Dorsolateral prefrontal cortex (tissue), 120 donors: ENCODE measurements at regions of chrX and their contacts with region 1.

Region 1: DNA sequence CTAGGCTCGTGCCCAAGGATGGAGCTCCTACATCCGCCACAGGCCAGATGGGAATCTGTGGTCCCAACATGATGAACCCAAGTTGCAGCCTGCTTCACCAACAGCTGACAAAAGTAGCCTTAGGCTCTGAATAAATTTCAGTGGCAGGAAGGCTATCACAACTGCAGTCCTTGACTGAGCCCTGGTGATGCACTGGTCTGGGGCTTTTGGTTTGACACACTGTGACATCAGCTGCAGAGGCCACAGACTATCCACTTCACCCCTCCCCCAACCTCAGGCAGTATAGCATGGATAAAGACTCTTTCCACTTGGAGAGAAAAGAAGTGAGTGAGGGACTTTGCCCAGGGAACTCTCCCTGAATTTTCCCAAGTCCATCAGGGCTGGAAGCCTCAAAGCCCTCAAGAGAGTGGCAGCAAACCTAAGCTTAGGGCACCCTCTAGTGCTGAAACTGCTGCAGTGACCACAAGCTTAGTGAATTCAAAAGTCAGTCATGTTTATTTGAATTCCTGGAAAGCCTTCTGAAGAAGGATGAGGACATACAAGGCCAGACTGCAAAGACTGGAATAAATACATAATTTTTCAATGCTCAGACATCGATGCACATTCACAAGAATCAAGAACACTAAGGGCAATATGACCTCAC is 135.0 kb upstream of the TENT5D start:
- DNase-seq: no peak
- H3K4me3 ChIP-seq: no peak overlapping the region
- H3K27ac ChIP-seq: no peak overlapping the region
- H3K27me3 ChIP-seq: peaks cover 0 to 34% (median 0%) of the 10 kb centered on the region in 45 donors
- CTCF ChIP-seq: peak in 11 of 56 donors; percentile 10 to 41 (median 15)

Region 2: GRCh38 chrX:79195027-79195426 is 1090.2 kb before region 1 on chrX:
- intact Hi-C with region 1: no loop called
- DNase-seq: no peak
- H3K4me3 ChIP-seq: no peak overlapping the region
- H3K27ac ChIP-seq: no peak overlapping the region
- H3K27me3 ChIP-seq: peaks cover 0 to 45% (median 8%) of the 10 kb centered on the region in 45 donors
- CTCF ChIP-seq: no peak

Region 3: GRCh38 chrX:80354966-80355465 is 69.8 kb after region 1 on chrX:
- intact Hi-C with region 1: no loop called
- DNase-seq: no peak
- H3K4me3 ChIP-seq: no peak overlapping the region
- H3K27ac ChIP-seq: no peak overlapping the region
- H3K27me3 ChIP-seq: peaks cover 0 to 57% (median 19%) of the 10 kb centered on the region in 45 donors
- CTCF ChIP-seq: no peak

Region 4: GRCh38 chrX:80403499-80403898 is 118.2 kb after region 1 on chrX:
- intact Hi-C with region 1: no loop called
- DNase-seq: no peak
- H3K4me3 ChIP-seq: no peak overlapping the region
- H3K27ac ChIP-seq: no peak overlapping the region
- H3K27me3 ChIP-seq: peaks cover 0 to 35% (median 8%) of the 10 kb centered on the region in 45 donors
- CTCF ChIP-seq: no peak

Region 5: DNA sequence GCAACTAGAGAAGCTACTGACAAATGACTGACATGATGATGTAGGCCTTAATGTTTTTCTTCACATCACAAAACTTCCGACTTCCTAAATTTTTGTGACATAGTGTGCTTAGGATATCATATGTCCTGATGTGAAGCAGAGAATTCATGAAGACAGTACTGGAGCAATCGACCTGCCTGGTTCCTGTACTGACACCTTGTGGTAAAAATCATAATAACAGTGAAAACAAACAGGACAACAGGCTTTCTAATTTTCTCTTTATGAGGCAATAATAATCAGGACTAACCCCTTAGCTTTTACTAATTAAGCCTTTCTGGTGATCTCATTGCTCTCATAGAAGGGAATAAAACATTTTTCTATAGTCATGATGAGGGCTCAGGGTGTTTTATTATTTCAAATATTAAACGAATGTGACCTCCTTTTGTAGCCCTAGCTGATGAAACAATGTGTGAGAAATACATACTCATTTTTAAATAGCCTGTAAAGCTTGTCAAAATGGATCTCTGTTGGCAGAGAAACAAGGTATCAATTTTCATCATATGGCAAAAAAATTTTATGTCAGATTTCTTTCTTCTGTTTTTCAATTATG is 293.4 kb after region 1 on chrX:
- intact Hi-C with region 1: loop called in 1 of 2 experiments (anchors 10 kb)
- DNase-seq: no peak
- H3K4me3 ChIP-seq: no peak overlapping the region
- H3K27ac ChIP-seq: no peak overlapping the region
- H3K27me3 ChIP-seq: peaks cover 0 to 34% (median 0%) of the 10 kb centered on the region in 45 donors
- CTCF ChIP-seq: peak in 55 of 56 donors; percentile 28 to 67 (median 51)